Caco-2 (cell line): ENCODE measurements at regions of chr5 and their contacts with region 1.

Region 1: GRCh38 chr5:95986001-95986400 is 24.4 kb upstream of the ELL2 start:
- DNase-seq: no peak
- H3K4me3 ChIP-seq: no peak overlapping the region
- H3K4me3 Mint-ChIP-seq: no peak overlapping the region
- H3K27ac Mint-ChIP-seq: peak overlapping the region; percentile 85
- H3K4me1 ChIP-seq: peaks cover 74% of the 10 kb centered on the region
- H3K4me1 Mint-ChIP-seq: peaks cover 9% of the 10 kb centered on the region
- H3K27me3 ChIP-seq: no peaks in the 10 kb centered on the region
- H3K27me3 Mint-ChIP-seq: no peaks in the 10 kb centered on the region
- CTCF ChIP-seq: no peak

Region 2: DNA sequence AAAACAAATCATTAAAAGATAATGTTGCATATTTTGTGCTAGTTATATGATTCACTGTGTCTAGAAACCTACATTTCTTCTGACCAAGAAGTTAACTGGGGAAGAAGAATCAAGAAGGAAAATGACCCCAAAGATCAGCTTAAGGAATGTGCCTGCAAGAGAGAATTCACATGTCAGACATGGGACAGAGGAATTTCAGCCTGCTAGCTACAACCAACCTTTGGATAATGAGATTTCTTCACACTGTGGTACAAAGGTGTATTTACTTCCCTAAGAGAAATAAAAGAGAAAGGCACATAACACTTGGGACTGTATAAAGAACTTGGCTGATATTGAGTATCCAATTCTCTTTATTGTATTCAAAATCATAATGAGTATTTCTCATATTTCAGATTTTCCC is 15.3 kb after region 1 on chr5:
- CTCF ChIA-PET with region 1: interaction called, 8 read pairs
- POLR2A ChIA-PET with region 1: interaction called, 7 read pairs
- intact Hi-C with region 1: loop called (anchors 1 kb)
- DNase-seq: peak in 1 of 2 experiments; percentile 60
- H3K4me3 ChIP-seq: no peak overlapping the region
- H3K4me3 Mint-ChIP-seq: no peak overlapping the region
- H3K27ac Mint-ChIP-seq: no peak overlapping the region
- H3K4me1 ChIP-seq: peaks cover 36% of the 10 kb centered on the region
- H3K4me1 Mint-ChIP-seq: peaks cover 24% of the 10 kb centered on the region
- H3K27me3 ChIP-seq: no peaks in the 10 kb centered on the region
- H3K27me3 Mint-ChIP-seq: no peaks in the 10 kb centered on the region
- CTCF ChIP-seq: no peak

Region 3: DNA sequence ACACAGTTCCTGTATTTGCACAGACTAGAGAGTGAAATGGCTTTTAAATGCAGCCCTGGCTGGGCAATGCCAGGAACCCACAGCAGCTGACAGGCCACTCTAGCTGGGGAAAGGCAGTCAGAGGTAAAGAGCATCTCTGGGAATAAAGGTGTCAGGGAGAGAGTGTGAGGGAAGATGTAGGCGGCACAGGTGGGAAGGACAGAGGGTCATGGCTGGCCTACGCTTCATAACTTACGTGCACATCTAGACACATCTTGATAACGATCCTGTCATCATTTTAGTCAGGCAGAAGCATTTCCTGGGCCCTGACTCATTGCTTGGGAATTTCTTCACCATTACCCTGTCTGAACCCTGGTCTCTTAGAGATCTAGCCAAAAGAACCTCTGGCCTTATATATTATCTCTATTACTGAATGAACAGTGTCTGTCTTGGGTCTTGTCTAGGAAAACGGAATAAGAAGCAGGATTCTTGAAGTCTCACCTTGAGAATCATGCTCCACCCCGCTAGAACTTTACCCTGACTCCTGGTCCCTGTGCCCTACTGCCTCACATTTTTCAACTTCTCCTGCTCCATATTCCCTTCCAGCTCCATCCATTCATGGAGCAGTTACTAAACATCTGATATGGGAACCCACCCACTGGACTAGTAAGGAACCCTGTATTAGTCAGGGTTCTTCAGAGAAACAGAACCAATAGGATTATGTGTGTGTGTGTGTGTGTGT is 82.1 kb after region 1 on chr5:
- CTCF ChIA-PET with region 1: no interaction called
- POLR2A ChIA-PET with region 1: no interaction called
- intact Hi-C with region 1: no loop called
- DNase-seq: peak; percentile 47 to 73
- H3K4me3 ChIP-seq: no peak overlapping the region
- H3K4me3 Mint-ChIP-seq: no peak overlapping the region
- H3K27ac Mint-ChIP-seq: peak overlapping the region; percentile 69
- H3K4me1 ChIP-seq: peaks cover 29% of the 10 kb centered on the region
- H3K4me1 Mint-ChIP-seq: peaks cover 34% of the 10 kb centered on the region
- H3K27me3 ChIP-seq: no peaks in the 10 kb centered on the region
- H3K27me3 Mint-ChIP-seq: no peaks in the 10 kb centered on the region
- CTCF ChIP-seq: no peak

Region 4: DNA sequence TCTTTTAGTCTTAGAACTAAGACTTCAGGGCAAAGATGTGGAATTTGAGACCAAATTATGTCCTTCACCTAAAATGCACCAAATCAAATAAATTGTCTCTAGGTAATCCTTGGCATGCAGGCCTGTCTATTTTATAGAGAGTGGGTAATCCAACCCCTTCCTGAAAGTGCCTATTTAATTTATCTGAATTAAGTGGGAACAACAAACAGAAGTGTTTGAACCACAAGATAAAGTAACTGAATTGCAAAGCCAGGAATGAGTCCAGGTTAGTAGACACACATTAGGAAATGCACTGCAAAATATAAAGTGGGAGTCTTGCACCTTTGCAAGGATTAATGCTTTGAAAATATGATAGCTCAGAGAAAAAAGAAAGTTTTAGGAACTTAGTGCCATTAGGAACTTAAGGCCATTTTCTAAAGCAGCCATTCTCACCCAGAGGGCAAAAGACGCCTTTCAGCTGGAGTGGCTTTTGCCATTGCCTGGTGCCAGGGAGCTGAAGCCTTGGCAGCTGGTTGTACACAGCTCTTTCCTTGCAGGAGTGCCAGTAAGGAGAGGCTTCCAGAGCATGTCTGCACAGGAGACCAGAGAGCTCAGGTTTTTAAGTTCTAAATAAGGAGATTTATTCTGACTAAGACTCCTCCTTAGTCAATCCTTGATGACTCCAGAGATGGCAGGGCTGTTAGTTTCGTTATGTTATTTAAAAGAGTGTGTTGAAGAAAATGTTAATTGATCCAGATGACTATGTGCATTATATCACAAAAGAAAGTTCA is 127.4 kb after region 1 on chr5:
- CTCF ChIA-PET with region 1: no interaction called
- POLR2A ChIA-PET with region 1: no interaction called
- intact Hi-C with region 1: loop called (anchors 1 kb)
- DNase-seq: no peak
- H3K4me3 ChIP-seq: no peak overlapping the region
- H3K4me3 Mint-ChIP-seq: no peak overlapping the region
- H3K27ac Mint-ChIP-seq: no peak overlapping the region
- H3K4me1 ChIP-seq: peaks cover 34% of the 10 kb centered on the region
- H3K4me1 Mint-ChIP-seq: peaks cover 23% of the 10 kb centered on the region
- H3K27me3 ChIP-seq: no peaks in the 10 kb centered on the region
- H3K27me3 Mint-ChIP-seq: no peaks in the 10 kb centered on the region
- CTCF ChIP-seq: no peak

Region 5: GRCh38 chr5:96331210-96331609 is 345.2 kb after region 1 on chr5:
- CTCF ChIA-PET with region 1: interaction called, 4 read pairs
- POLR2A ChIA-PET with region 1: no interaction called
- intact Hi-C with region 1: loop called (anchors 1 kb)
- DNase-seq: no peak
- H3K4me3 ChIP-seq: no peak overlapping the region
- H3K4me3 Mint-ChIP-seq: no peak overlapping the region
- H3K27ac Mint-ChIP-seq: no peak overlapping the region
- H3K4me1 ChIP-seq: peaks cover 35% of the 10 kb centered on the region
- H3K4me1 Mint-ChIP-seq: peaks cover 29% of the 10 kb centered on the region
- H3K27me3 ChIP-seq: no peaks in the 10 kb centered on the region
- H3K27me3 Mint-ChIP-seq: no peaks in the 10 kb centered on the region
- CTCF ChIP-seq: no peak

Region 6: DNA sequence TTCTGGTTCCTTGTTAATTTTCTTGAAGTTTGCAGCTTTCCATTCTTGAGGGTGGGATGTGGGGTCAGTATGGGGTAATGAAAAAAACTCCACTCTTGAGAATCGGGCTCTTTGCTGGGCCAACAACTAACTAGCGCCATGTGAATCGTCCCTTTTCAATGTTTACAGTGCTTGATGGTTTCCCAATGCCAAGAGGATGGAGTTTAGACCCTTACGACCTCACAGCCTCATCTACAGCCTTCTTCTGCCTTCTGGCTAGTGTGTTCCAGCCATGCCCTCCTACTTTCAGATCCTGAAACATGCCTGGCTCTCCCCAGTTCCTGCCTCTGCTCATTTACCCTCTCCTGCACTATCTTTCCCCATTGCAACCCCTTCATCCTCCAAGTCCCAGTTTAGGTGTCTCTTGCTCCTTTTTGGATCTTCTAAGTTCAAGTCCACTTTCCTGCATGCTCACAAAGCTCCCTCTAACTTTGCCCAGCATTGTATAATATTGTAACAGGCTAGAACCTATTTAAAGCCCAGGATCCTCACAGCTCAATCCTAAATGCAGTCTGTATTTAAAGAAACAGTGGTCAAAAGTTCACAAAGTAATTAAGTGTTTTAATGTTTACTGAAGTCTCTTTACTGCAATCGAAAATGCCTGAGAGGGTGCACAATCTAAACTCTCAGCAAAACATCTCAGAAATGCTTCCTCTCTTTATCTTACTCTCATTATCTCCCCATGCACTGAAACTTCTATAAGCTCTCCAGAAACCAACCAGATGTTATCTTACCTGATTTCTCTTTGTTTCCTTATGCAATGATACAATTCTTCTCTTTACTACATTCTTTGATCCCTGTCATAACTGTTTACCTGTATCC is 655.6 kb after region 1 on chr5:
- CTCF ChIA-PET with region 1: no interaction called
- POLR2A ChIA-PET with region 1: no interaction called
- intact Hi-C with region 1: loop called (anchors 5 kb)
- DNase-seq: peak; percentile 61 to 73
- H3K4me3 ChIP-seq: no peak overlapping the region
- H3K4me3 Mint-ChIP-seq: peak overlapping the region; percentile 55
- H3K27ac Mint-ChIP-seq: peak overlapping the region; percentile 86
- H3K4me1 ChIP-seq: peaks cover 61% of the 10 kb centered on the region
- H3K4me1 Mint-ChIP-seq: peaks cover 49% of the 10 kb centered on the region
- H3K27me3 ChIP-seq: no peaks in the 10 kb centered on the region
- H3K27me3 Mint-ChIP-seq: no peaks in the 10 kb centered on the region
- CTCF ChIP-seq: no peak